GM10248 (cell line): ENCODE measurements at regions of chr3 and their contacts with region 1.

Region 1: GRCh38 chr3:104273046-104273649 is 1093.6 kb upstream of the ALCAM start:
- DNase-seq: no peak
- CTCF ChIP-seq: peak; percentile 62

Region 2: GRCh38 chr3:104102386-104102785 is 170.8 kb before region 1 on chr3:
- CTCF ChIA-PET with region 1: no interaction called
- POLR2A ChIA-PET with region 1: no interaction called
- DNase-seq: peak; percentile 46
- CTCF ChIP-seq: peak; percentile 60

Region 3: DNA sequence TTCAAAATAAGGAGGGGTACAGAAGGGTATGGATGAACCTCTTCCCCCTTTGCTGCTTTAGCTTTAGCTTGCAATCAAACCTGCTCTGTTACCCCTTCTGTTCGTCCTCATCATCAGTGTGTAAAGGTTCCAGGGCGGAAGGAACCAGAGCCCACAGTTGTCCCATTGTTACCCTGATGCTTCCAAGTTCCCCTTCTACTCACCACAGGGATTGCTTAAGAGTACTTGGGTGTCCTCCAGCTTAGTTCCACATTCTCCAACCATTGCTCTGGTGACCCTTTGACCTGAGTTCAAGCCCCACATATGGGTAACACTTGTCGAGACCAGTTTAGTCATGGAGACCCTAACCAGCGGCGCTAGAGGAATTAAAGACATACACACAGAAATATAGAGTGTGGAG is 13.5 kb after region 1 on chr3:
- CTCF ChIA-PET with region 1: interaction called, 12 read pairs
- POLR2A ChIA-PET with region 1: no interaction called
- DNase-seq: no peak
- CTCF ChIP-seq: no peak